T-cell (primary cell): ENCODE measurements at regions of chr3 and their contacts with region 1.

Region 1: DNA sequence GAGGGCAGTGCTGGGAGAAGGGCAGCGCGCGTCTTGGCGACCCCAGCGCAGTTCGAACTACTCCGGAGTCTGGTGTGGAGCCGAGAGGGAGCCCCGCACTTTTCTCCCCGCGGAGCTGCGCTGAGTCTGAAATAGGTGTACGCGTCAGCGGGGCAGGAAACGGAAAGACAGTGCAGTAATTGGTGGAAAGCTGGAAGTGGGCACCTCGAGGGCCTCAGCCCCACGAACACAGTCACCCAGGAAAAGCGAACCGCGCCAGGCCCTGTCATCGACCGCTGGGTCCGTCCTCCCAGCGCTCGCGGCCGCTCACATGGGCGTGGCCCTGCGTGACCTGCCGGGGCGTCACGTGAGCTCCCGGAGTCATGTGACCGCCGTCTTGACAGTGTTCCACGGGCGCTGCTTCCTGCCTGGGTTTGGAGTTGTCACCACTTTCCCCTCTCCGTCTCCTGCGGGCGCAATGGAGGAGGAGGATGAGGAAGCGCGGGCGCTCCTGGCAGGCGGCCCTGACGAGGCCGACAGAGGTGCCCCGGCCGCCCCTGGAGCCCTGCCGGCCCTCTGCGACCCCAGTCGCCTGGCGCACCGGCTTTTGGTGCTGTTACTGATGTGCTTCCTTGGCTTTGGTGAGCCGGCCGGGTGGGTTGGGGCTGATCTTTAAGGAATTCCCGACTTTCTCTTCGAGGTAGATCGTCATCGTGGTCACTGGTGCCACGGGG is at the start of gene MFSD1:
- DNase-seq: peak; percentile 69 to 92 (median 80)
- ATAC-seq: peak; percentile 88 to 90 (median 90)
- H3K4me3 ChIP-seq: peak within 1 kb of the TSS; percentile 84 to 99
- H3K4me3 Mint-ChIP-seq: peak within 1 kb of the TSS; percentile 85 to 89 (median 89)
- H3K27ac ChIP-seq: peak within 1 kb of the TSS; percentile 76
- H3K27ac Mint-ChIP-seq: peak within 1 kb of the TSS; percentile 92 to 93
- H3K4me1 ChIP-seq: peaks cover 14 to 18% of the 10 kb centered on the region in 2 experiments
- H3K4me1 Mint-ChIP-seq: peaks cover 38 to 41% (median 40%) of the 10 kb centered on the region in 3 donors
- H3K27me3 ChIP-seq: no peaks in the 10 kb centered on the region
- H3K27me3 Mint-ChIP-seq: no peaks in the 10 kb centered on the region
- total RNA-seq, gene MFSD1: 17.7 to 28.3 (median 25.5) TPM

Region 2: DNA sequence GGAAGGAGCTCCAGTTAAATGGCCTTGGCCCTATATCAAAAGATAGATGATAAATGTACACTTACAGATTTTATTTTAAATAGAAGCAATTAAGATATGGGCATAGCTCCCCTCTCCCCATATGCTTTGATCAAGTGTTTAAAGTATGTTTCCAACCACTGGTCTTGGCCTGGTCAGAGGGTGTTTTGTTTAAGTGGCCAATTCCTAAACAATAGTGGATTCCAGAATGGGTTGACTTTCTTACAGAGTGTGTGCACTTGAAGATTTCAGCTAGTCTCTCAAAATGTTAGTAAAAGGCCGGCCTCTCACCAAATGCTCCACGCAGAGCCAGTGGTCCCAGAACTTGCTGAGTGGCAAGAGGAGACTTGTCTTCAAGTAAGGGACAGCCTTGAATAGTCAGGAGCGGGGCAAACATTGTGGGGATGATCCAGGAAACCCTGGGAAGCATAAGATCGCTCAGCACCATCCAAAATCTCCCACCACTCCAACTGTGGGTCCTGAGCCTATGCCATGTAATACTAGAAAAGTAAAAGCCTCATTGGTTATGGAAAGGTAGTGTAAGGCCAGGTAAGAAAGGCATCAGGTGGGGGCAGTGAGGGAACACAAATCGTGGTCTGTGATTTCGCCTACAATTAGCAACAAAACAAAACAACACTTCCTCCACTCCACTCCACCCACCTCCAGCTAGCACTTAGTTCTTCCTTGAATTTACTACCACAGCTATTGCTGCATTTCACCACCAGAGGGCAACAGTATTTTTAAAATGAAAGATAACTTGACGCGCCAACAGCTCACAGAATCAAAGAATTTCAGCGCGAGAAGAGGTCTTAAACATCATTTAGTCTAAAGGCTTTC is 74.4 kb before region 1 on chr3:
- CTCF ChIA-PET with region 1: interaction called, 5 to 13 read pairs
- POLR2A ChIA-PET with region 1: no interaction called
- DNase-seq: peak in 30 of 35 experiments; percentile 10 to 76 (median 34)
- ATAC-seq: peak; percentile 63 to 73 (median 70)
- H3K4me3 ChIP-seq: peak overlapping the region in 1 of 2 donors; percentile 8
- H3K4me3 Mint-ChIP-seq: peak overlapping the region; percentile 22 to 47 (median 41)
- H3K27ac ChIP-seq: no peak overlapping the region
- H3K27ac Mint-ChIP-seq: peak overlapping the region; percentile 55 to 68
- H3K4me1 ChIP-seq: peaks cover 5 to 25% of the 10 kb centered on the region in 2 experiments
- H3K4me1 Mint-ChIP-seq: peaks cover 39 to 57% (median 45%) of the 10 kb centered on the region in 3 donors
- H3K27me3 ChIP-seq: peaks cover 0 to 20% of the 10 kb centered on the region in 2 experiments
- H3K27me3 Mint-ChIP-seq: peaks cover 5 to 7% of the 10 kb centered on the region in 2 donors